Heart left ventricle (tissue), 16 donors: ENCODE measurements at regions of chr16 and their contacts with region 1.

Region 1: GRCh38 chr16:25224731-25225319 is 8.1 kb downstream of the AQP8 start:
- DNase-seq: no peak
- ATAC-seq: no peak
- H3K4me3 ChIP-seq: no peak overlapping the region
- H3K27ac ChIP-seq: no peak overlapping the region
- H3K4me1 ChIP-seq: peaks cover 0 to 9% (median 0%) of the 10 kb centered on the region in 12 donors
- H3K27me3 ChIP-seq: no peaks in the 10 kb centered on the region
- CTCF ChIP-seq: no peak
- POLR2A ChIP-seq: no peak

Region 2: DNA sequence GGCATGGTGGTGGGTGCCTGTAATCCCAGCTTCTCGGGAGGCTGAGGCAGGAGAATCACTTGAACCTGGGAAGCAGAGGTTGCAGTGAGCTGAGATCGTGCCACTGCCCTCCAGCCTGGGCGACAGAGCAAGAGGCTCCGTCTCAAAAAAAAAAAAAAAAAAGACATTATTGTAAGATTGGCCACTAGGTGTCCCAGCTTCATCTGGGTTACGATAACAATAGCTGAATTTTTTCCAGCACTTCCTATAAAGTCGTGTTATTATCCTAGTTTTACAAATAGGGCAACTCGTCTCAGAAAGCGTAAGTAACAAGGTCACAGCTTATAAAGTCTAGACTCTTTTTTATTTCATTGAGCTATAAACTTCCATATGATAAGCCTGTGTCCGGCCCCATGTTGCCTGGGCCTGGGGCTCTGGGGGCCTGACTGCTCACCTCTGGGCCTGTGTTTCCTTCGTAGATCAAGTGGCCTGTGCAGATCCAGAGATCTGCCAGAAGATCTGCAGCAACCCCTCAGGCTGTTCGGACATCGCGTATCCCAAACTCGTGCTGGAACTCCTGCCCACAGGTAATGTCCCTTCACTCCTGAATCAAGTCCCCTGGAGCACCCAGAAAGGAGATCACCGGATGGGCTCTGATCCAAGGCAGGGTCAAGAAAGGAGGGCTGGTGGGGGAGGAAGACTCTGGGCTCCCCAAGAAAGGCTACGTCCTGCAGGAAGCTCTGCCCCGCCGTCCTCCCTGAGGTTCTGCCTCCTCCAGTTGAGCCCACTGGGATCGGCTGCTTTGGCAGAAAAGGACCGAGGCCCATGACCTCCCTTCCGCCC is 318.4 kb before region 1 on chr16:
- intact Hi-C with region 1: loop called in 2 of 10 experiments (anchors 10 kb)
- DNase-seq: no peak
- ATAC-seq: no peak
- H3K4me3 ChIP-seq: no peak overlapping the region
- H3K27ac ChIP-seq: no peak overlapping the region
- H3K4me1 ChIP-seq: peaks cover 0 to 4% (median 0%) of the 10 kb centered on the region in 12 donors
- H3K27me3 ChIP-seq: no peaks in the 10 kb centered on the region
- CTCF ChIP-seq: peak in 11 of 12 donors; percentile 22 to 54 (median 41)
- POLR2A ChIP-seq: no peak

Region 3: GRCh38 chr16:24939234-24939633 is 285.6 kb before region 1 on chr16:
- intact Hi-C with region 1: loop called in 1 of 10 experiments (anchors 10 kb)
- DNase-seq: no peak
- ATAC-seq: peak in 1 of 4 donors; percentile 42
- H3K4me3 ChIP-seq: no peak overlapping the region
- H3K27ac ChIP-seq: no peak overlapping the region
- H3K4me1 ChIP-seq: no peaks in the 10 kb centered on the region
- H3K27me3 ChIP-seq: no peaks in the 10 kb centered on the region
- CTCF ChIP-seq: no peak
- POLR2A ChIP-seq: no peak

Region 4: GRCh38 chr16:25051406-25052150 is 173.2 kb before region 1 on chr16:
- intact Hi-C with region 1: loop called (anchors 1 to 10 kb)
- DNase-seq: peak in 2 of 5 donors; percentile 39 to 43
- ATAC-seq: peak; percentile 58 to 69 (median 64)
- H3K4me3 ChIP-seq: peak overlapping the region in 8 of 12 donors; percentile 5 to 34 (median 25)
- H3K27ac ChIP-seq: peak overlapping the region; percentile 70 to 97 (median 84)
- H3K4me1 ChIP-seq: peaks cover 3 to 50% (median 26%) of the 10 kb centered on the region in 12 donors
- H3K27me3 ChIP-seq: no peaks in the 10 kb centered on the region
- CTCF ChIP-seq: no peak
- POLR2A ChIP-seq: peak in 1 of 2 donors; percentile 30

Region 5: DNA sequence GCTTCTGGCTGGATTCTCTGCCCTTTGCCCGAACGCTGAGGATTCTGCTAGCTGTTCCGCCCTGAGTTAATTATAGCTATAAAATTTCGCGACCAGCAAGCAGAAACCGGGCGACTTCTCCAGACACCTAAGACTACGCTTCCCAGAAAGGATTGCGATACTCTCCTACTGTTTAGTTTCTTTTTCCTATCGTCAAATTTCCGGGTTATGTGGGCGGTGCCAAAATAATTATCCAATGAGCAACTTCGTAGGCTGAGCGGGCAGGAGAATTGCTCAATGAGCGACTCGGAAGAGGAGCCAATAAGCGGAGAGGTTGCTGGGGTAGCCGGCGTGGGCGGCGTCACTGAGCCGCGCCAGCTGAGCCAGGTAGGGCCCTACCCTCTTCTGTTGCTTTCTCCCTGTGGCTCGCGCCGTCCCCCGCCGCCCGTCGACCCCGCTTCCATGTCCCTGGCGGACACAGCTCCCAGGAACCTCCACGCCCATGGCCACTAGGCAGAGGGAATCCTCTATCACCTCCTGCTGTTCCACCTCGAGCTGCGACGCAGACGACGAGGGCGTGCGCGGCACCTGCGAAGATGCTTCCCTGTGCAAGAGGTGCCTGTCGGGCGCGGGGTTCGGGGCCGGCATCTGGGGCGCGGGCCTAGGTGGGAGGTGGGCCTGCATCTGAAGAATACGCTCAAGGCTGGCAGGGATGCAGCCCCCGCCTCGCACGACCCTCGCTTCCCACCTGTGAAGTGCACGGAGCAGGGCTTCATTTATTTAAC is 113.2 kb before region 1 on chr16 and contains the start of gene LCMT1:
- intact Hi-C with region 1: loop called in 1 of 10 experiments (anchors 10 kb)
- DNase-seq: peak; percentile 89 to 94 (median 94)
- ATAC-seq: peak; percentile 85 to 91 (median 89)
- H3K4me3 ChIP-seq: peak within 1 kb of the TSS; percentile 47 to 99 (median 94)
- H3K27ac ChIP-seq: peak within 1 kb of the TSS; percentile 60 to 93 (median 87)
- H3K4me1 ChIP-seq: peaks cover 0 to 46% (median 34%) of the 10 kb centered on the region in 12 donors
- H3K27me3 ChIP-seq: no peaks in the 10 kb centered on the region
- CTCF ChIP-seq: peak in 3 of 12 donors; percentile 5 to 14 (median 9)
- POLR2A ChIP-seq: peak in 1 of 2 donors; percentile 69
- total RNA-seq, gene LCMT1: 33.6 to 50.0 (median 39.6) TPM

Region 6: DNA sequence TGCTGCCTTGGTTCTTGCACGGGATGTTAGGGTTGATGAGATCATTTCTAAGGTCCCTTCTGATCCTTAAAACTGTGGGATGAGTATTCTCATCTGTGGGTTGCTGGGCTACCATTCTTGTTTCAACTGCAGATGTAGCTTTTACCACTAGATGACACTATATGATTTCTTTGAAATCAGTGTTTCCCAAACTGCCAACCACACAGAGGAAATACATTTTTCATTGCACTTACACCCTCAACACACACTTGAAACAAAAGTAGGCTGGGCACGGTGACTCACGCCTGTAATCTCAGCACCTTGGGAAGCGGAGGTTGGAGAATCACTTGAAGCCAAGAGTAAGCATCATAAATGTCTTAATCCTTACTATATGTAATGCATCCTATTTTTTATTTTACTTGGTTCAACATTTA is 98.0 kb before region 1 on chr16:
- intact Hi-C with region 1: loop called in 2 of 10 experiments (anchors 10 kb)
- DNase-seq: no peak
- ATAC-seq: peak in 2 of 4 donors; percentile 38 to 42
- H3K4me3 ChIP-seq: no peak overlapping the region
- H3K27ac ChIP-seq: no peak overlapping the region
- H3K4me1 ChIP-seq: peaks cover 0 to 5% (median 0%) of the 10 kb centered on the region in 12 donors
- H3K27me3 ChIP-seq: no peaks in the 10 kb centered on the region
- CTCF ChIP-seq: peak in 11 of 12 donors; percentile 9 to 55 (median 34)
- POLR2A ChIP-seq: no peak

Region 7: GRCh38 chr16:25135254-25135878 is 89.5 kb before region 1 on chr16:
- intact Hi-C with region 1: loop called in 1 of 10 experiments (anchors 10 kb)
- DNase-seq: no peak
- ATAC-seq: no peak
- H3K4me3 ChIP-seq: no peak overlapping the region
- H3K27ac ChIP-seq: no peak overlapping the region
- H3K4me1 ChIP-seq: no peaks in the 10 kb centered on the region
- H3K27me3 ChIP-seq: no peaks in the 10 kb centered on the region
- CTCF ChIP-seq: no peak
- POLR2A ChIP-seq: no peak